ENCODE measurements at regions of chr3 and their contacts with region 1.

Region 1: GRCh38 chr3:114383875-114384557 is 90.2 kb downstream of the TIGIT start:
- DNase-seq: peak; percentile 47
- ATAC-seq: peak; percentile 85
- H3K4me3 ChIP-seq: no peak overlapping the region
- H3K27ac ChIP-seq: peak overlapping the region; percentile 41; the same call in 1 of the 2 replicates
- H3K4me1 ChIP-seq: peaks cover 26 to 58% of the 10 kb centered on the region in 2 experiments
- H3K27me3 ChIP-seq: no peaks in the 10 kb centered on the region
- CTCF ChIP-seq: peak; percentile 52 to 95 (median 94); a peak in 5 of 6 replicates
- POLR2A ChIP-seq: no peak
- RAD21 ChIP-seq: peak; percentile 92

Region 2: DNA sequence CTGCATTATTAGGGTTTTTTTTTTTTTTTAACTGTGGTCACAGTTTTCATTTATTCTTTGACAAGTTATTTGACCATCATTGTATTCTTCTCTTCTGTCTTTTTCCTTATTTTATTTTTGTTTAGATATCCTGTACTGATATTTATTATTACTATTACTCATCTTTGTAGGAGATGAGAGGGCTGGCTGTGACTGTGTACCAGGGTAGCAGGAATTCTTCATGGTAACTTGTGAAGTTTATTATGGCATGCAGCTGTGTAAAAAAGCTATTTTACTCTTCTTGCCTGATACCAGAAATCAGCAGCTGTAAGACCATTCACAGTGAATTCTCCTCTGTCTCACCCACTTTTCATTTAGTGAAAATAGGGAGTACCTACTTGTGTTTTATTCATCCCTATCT is 592.6 kb before region 1 on chr3:
- CTCF ChIA-PET with region 1: no interaction called
- POLR2A ChIA-PET with region 1: no interaction called
- RAD21 ChIA-PET with region 1: no interaction called
- intact Hi-C with region 1: no loop called
- DNase-seq: no peak
- ATAC-seq: no peak
- H3K4me3 ChIP-seq: no peak overlapping the region
- H3K27ac ChIP-seq: no peak overlapping the region
- H3K4me1 ChIP-seq: no peaks in the 10 kb centered on the region
- H3K27me3 ChIP-seq: no peaks in the 10 kb centered on the region
- CTCF ChIP-seq: no peak
- POLR2A ChIP-seq: no peak
- RAD21 ChIP-seq: no peak

Region 3: DNA sequence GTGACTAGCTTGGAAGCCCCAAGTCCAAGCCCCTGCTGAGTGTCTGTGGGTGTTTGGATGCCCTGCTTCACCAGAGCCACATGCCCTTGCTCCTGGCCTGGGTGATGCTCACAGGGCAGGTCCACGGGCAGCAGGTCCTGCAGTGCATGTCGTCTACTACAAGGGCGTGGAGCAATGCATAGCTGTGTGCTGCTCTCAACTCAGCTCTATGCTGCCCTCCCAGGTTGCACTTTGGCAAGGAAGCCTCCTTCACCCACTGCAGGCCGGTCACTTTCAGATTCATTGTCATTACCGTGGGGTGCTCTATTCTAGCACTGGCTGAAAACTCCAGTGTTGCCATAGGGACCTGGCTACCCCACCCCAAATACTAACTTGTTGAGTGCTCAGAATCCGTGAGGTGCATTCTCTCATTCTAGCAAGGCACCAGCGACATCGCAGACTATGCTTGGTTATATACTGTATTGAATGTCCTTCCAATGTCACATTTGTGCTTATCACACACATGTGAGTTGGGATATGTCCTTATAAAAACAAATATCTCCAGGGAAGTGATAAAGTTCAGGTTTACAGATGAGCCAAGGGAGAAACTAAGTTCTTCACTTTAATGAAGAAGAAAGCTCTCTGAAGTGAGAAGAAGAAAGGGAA is 493.6 kb before region 1 on chr3:
- CTCF ChIA-PET with region 1: no interaction called
- POLR2A ChIA-PET with region 1: no interaction called
- RAD21 ChIA-PET with region 1: no interaction called
- intact Hi-C with region 1: no loop called
- DNase-seq: no peak
- ATAC-seq: peak; percentile 60
- H3K4me3 ChIP-seq: no peak overlapping the region
- H3K27ac ChIP-seq: no peak overlapping the region
- H3K4me1 ChIP-seq: no peaks in the 10 kb centered on the region
- H3K27me3 ChIP-seq: no peaks in the 10 kb centered on the region
- CTCF ChIP-seq: no peak
- POLR2A ChIP-seq: no peak
- RAD21 ChIP-seq: no peak

Region 4: GRCh38 chr3:114756506-114757279 is 372.7 kb after region 1 on chr3:
- CTCF ChIA-PET with region 1: no interaction called
- POLR2A ChIA-PET with region 1: no interaction called
- RAD21 ChIA-PET with region 1: no interaction called
- intact Hi-C with region 1: no loop called
- DNase-seq: peak; percentile 61
- ATAC-seq: peak; percentile 60
- H3K4me3 ChIP-seq: peak overlapping the region; percentile 25 to 62
- H3K27ac ChIP-seq: peak overlapping the region; percentile 83; the same call in 1 of the 2 replicates
- H3K4me1 ChIP-seq: peaks cover 52 to 76% of the 10 kb centered on the region in 2 experiments
- H3K27me3 ChIP-seq: no peaks in the 10 kb centered on the region
- CTCF ChIP-seq: no peak
- POLR2A ChIP-seq: no peak
- RAD21 ChIP-seq: peak; percentile 23

Region 5: DNA sequence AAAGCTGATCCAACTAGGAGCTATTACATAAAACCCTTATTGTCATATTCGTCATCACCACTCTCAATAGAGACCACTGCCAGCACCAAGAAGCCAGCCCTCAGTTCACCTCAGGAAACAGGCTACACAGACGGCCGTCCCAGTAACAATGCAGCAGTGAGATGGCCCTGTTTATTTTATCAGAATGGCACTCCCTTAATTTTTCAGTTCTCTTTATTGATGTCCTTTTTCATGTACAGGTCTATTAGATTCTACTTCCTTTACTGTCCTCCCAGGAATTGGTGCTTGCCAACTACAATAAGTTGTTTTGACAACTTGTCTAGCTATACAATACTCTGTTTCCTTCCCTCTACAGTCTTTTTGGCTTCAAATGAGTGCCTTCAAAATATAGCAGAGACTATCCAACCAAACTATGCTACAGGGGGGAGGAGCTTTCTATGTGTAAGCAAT is 490.5 kb after region 1 on chr3:
- CTCF ChIA-PET with region 1: no interaction called
- POLR2A ChIA-PET with region 1: no interaction called
- RAD21 ChIA-PET with region 1: no interaction called
- intact Hi-C with region 1: loop called (anchors 5 kb)
- DNase-seq: no peak
- ATAC-seq: no peak
- H3K4me3 ChIP-seq: no peak overlapping the region
- H3K27ac ChIP-seq: no peak overlapping the region
- H3K4me1 ChIP-seq: peaks cover 19 to 34% of the 10 kb centered on the region in 2 experiments
- H3K27me3 ChIP-seq: no peaks in the 10 kb centered on the region
- CTCF ChIP-seq: no peak
- POLR2A ChIP-seq: no peak
- RAD21 ChIP-seq: no peak

Measured in HCT116 (cell line).